Activated CD4-positive, alpha-beta memory T cell treated with anti-CD3 and anti-CD28 coated beads for 36 hours (primary cell): ENCODE measurements at regions of chr13 and their contacts with region 1.

Region 1: GRCh38 chr13:42354241-42355091 is 82.5 kb downstream of the AKAP11 start:
- DNase-seq: peak; percentile 66
- H3K4me3 Mint-ChIP-seq: peak overlapping the region; percentile 54
- H3K27ac Mint-ChIP-seq: peak overlapping the region; percentile 98
- H3K4me1 Mint-ChIP-seq: peaks cover 70% of the 10 kb centered on the region
- H3K27me3 Mint-ChIP-seq: no peaks in the 10 kb centered on the region

Region 2: GRCh38 chr13:41720839-41721561 is 633.5 kb before region 1 on chr13:
- CTCF ChIA-PET with region 1: no interaction called
- POLR2A ChIA-PET with region 1: no interaction called
- intact Hi-C with region 1: no loop called
- DNase-seq: no peak
- H3K4me3 Mint-ChIP-seq: no peak overlapping the region
- H3K27ac Mint-ChIP-seq: no peak overlapping the region
- H3K4me1 Mint-ChIP-seq: no peaks in the 10 kb centered on the region
- H3K27me3 Mint-ChIP-seq: no peaks in the 10 kb centered on the region

Region 3: DNA sequence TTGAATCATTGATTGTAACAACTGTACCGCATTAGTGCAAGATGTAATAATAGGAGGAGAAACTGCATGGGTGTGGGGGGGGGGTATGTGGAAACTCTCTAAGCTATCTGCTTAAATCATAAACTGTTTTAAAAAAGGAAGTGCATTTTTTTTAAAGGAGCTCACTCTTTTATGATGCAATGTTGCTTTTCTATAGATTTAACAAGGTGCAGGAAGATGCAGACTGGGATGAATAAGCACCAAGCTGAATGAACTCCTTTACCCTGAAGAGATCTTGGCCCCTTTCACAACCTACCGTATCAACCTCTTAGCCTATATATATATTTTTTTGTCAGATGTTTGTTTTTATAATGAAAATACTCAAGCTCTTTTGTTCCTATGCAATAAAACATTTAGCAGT is 13.4 kb after region 1 on chr13:
- CTCF ChIA-PET with region 1: interaction called, 12 read pairs
- POLR2A ChIA-PET with region 1: interaction called, 16 read pairs
- intact Hi-C with region 1: loop called (anchors 1 kb)
- DNase-seq: no peak
- H3K4me3 Mint-ChIP-seq: no peak overlapping the region
- H3K27ac Mint-ChIP-seq: no peak overlapping the region
- H3K4me1 Mint-ChIP-seq: peaks cover 47% of the 10 kb centered on the region
- H3K27me3 Mint-ChIP-seq: no peaks in the 10 kb centered on the region

Region 4: DNA sequence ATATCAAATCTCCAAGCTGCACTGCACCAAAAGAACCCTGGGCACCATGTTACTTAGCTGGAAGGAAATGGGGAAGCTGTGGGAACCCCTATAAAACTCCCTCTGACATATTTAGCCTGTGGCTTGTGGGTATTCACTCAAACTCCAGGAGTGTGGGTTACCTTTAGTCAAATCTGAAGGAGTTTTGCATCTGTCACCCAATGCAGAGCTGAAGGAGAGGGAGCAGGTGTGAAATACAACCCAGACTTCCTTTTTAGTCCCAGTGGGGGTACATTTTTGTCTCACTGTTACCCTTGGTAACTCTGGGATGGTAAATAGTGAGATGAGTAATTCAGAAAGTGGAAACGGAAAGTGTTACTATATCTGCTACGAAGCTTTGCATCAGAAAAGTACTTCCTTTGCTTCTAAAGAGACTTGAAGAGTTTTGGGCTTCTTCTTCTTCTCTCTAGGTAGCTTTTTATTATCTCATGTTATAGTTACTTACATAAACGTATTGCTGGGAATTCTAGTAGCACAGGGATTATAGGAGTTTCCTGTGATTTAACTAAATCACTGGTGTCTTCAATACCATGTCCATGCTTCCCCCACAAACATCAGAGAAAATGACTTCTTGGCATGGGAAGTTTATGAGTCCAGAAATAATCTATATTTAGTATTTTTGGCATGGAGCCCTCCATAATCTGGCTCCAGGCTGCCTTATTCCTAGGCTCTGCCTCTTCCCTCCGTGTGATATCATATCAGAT is 23.3 kb after region 1 on chr13:
- CTCF ChIA-PET with region 1: interaction called, 5 read pairs
- POLR2A ChIA-PET with region 1: interaction called, 47 read pairs
- intact Hi-C with region 1: loop called (anchors 1 kb)
- DNase-seq: peak; percentile 61
- H3K4me3 Mint-ChIP-seq: peak overlapping the region; percentile 30
- H3K27ac Mint-ChIP-seq: peak overlapping the region; percentile 92
- H3K4me1 Mint-ChIP-seq: peaks cover 61% of the 10 kb centered on the region
- H3K27me3 Mint-ChIP-seq: no peaks in the 10 kb centered on the region

Region 5: DNA sequence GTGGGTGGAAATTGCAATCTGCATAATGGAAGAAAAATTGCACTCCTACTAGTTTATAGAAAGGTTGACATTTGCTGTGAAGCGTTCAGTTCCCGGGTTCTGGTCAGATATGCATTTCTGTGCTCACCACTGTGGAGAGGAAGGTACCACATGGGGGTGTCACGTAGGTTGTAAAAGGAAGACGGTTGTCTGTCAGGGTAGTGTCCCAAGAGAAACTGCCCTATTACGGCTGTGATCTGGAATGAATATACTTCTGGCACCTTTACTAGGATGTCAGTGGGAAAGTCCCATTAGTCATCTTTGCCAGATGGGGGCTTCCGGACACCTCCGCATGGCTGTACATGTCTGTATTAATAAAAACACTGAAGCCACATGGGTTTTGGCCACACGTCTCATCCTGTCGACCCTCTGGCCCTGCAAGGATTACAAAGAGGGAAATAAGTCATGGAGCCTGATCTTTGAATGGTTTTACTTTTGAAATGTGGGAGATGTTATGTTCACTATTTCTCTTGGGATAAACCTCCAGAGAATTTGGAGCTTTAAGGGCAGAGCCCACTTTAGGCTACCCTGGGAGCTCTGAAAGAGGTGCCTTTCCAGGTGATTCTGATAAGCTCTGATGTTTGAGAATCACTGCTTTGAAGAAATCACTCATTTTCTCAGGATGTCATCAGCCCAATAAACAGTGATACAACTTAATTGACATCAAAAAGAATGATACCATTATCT is 51.4 kb after region 1 on chr13:
- CTCF ChIA-PET with region 1: interaction called, 3 read pairs
- POLR2A ChIA-PET with region 1: interaction called, 28 read pairs
- intact Hi-C with region 1: loop called (anchors 1 kb)
- DNase-seq: peak; percentile 89
- H3K4me3 Mint-ChIP-seq: peak overlapping the region; percentile 59
- H3K27ac Mint-ChIP-seq: peak overlapping the region; percentile 93
- H3K4me1 Mint-ChIP-seq: peaks cover 75% of the 10 kb centered on the region
- H3K27me3 Mint-ChIP-seq: no peaks in the 10 kb centered on the region

Region 6: GRCh38 chr13:42420304-42420703 is 65.8 kb after region 1 on chr13:
- CTCF ChIA-PET with region 1: no interaction called
- POLR2A ChIA-PET with region 1: no interaction called
- intact Hi-C with region 1: no loop called
- DNase-seq: peak; percentile 81
- H3K4me3 Mint-ChIP-seq: no peak overlapping the region
- H3K27ac Mint-ChIP-seq: no peak overlapping the region
- H3K4me1 Mint-ChIP-seq: peaks cover 39% of the 10 kb centered on the region
- H3K27me3 Mint-ChIP-seq: no peaks in the 10 kb centered on the region

Region 7: GRCh38 chr13:42478531-42479156 is 124.2 kb after region 1 on chr13:
- CTCF ChIA-PET with region 1: interaction called, 3 read pairs
- POLR2A ChIA-PET with region 1: no interaction called
- intact Hi-C with region 1: loop called (anchors 1 kb)
- DNase-seq: no peak
- H3K4me3 Mint-ChIP-seq: no peak overlapping the region
- H3K27ac Mint-ChIP-seq: no peak overlapping the region
- H3K4me1 Mint-ChIP-seq: peaks cover 23% of the 10 kb centered on the region
- H3K27me3 Mint-ChIP-seq: no peaks in the 10 kb centered on the region

Region 8: GRCh38 chr13:42574435-42575311 is 220.2 kb after region 1 on chr13:
- CTCF ChIA-PET with region 1: no interaction called
- POLR2A ChIA-PET with region 1: no interaction called
- intact Hi-C with region 1: loop called (anchors 10 kb)
- DNase-seq: peak; percentile 75
- H3K4me3 Mint-ChIP-seq: peak overlapping the region; percentile 73
- H3K27ac Mint-ChIP-seq: peak overlapping the region; percentile 55
- H3K4me1 Mint-ChIP-seq: peaks cover 34% of the 10 kb centered on the region
- H3K27me3 Mint-ChIP-seq: peaks cover 26% of the 10 kb centered on the region